Right ventricle myocardium inferior (tissue), 1 donor: ENCODE measurements at regions of chr5 and their contacts with region 1.

Region 1: DNA sequence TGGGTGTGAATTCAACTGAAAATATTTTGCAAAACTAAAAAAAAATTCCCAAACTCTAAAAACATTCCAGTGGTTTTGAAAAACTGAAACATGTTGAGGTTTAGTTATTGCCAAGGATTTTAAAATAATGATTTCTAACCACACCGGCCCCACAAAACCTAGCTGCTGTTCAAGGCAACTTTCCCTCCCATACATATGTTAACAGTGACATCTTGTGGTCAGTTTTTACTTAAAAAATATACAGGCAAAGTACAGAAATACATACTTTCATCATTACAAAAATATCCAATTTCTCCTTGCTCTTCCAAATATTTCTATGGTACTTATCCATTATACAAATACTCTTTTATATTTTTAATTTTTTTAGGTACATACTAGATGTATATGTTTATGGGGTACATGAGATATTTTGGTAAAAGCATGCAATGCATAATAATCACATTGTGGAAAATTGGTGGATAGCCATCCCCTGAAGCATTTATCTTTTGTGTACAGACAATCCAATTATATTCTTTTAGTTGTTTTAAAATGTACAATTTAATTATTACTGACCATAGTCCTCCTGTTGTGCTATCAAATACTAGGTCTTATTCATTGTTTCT is 34.4 kb upstream of the MRPS30 start:
- DNase-seq: no peak
- ATAC-seq: no peak

Region 2: GRCh38 chr5:43729846-43730478 is 1044.4 kb before region 1 on chr5:
- intact Hi-C with region 1: loop called (anchors 5 kb)
- DNase-seq: no peak
- ATAC-seq: no peak

Region 3: DNA sequence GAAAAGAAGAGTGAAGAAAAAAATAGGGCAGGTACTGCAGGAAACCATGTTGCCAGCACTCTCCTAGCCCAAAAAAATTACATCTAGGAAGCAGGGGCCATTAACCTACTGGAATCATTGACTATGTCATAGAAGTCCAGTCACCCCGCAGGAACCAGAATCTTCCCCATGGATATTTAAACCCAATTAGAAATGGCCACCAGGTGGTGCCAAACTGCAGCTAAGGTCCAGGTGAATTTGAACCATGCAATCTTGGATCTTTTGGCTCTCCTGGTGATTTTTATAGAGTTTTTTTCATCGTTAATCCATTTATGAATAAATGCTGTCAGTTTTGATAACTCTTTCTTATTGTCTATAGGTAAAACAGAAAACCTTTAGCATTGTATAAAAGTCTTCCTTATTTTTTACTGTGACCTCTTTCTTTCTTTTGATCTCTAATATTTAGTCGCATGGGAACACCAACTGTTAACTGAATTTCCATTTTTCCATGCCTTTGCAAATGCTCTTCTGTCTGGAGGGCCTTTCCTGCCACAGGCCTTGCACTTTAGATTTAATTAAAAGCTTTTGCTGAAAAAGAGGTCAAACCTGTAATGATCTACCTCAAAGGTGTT is 237.6 kb before region 1 on chr5:
- intact Hi-C with region 1: loop called (anchors 2 kb)
- DNase-seq: no peak
- ATAC-seq: no peak

Region 4: GRCh38 chr5:44808435-44809214 is 34.2 kb after region 1 on chr5 and contains the start of gene MRPS30:
- intact Hi-C with region 1: no loop called
- DNase-seq: peak; percentile 89
- ATAC-seq: peak; percentile 100
- total RNA-seq, gene MRPS30: 71.9 TPM